ENCODE measurements at regions of chr10 and their contacts with region 1.

Region 1: DNA sequence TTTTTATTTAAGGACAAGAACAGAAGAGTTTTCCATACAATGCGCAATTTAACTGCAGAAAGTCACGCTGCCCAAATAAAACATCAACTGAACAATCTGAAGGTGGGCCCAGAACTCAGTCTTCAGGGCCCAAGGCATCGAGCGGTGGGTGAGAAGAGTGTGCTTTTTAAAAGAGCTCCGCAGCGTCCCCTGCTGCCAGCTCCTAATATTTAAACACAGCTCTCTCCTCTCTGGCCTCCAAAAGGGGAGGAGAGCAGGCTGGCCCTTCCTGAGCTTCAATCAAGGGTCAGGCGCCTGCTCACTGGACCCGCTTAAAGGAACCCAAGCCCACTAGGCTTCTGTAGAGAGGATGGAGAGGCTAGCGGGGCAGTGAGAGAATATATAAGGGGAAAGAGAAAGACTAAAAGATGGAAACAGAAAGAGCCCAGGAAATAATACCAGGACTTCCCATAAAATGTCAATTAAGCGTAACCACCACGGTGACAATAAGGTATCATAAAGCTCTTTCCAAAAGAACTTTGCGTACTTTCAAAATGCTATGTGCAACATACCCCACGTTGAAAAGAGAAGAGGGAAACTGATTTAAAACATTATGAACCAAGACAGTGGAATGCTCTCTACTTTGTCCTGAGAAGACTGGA is 2.8 kb downstream of the FAM53B start:
- DNase-seq: peak; percentile 80
- ATAC-seq: peak; percentile 67
- H3K4me3 ChIP-seq: peak overlapping the region; percentile 44 to 87 (median 62)
- H3K27ac ChIP-seq: peak overlapping the region; percentile 70
- H3K4me1 ChIP-seq: peaks cover 77% of the 10 kb centered on the region
- H3K27me3 ChIP-seq: no peaks in the 10 kb centered on the region; a peak in 1 of 5 replicates
- CTCF ChIP-seq: peak; percentile 86
- EP300 ChIP-seq: no peak
- POLR2A ChIP-seq: no peak
- RAD21 ChIP-seq: peak; percentile 79

Region 2: DNA sequence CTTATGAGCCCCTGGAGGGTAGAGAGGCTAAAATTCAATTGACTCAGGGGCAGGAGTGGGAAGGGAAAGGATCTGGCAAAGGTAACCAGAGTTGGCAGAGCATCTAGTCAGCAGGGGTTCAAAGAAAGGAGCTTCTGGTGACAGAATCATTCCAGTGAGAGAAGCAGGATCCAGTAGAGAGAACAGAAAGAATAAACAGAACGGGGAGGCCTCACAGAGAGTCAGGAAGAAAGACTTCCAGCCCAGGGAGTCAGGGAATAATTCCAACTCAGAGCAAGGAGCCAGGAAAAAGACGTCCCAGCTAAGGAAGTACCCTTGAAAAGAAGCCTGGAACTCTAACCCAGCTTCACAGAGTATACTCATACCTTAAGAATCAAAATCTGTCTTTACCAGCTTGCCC is 783.2 kb before region 1 on chr10:
- CTCF ChIA-PET with region 1: no interaction called
- POLR2A ChIA-PET with region 1: no interaction called
- in situ Hi-C with region 1: no loop called
- intact Hi-C with region 1: no loop called
- DNase-seq: no peak
- ATAC-seq: no peak
- H3K4me3 ChIP-seq: no peak overlapping the region
- H3K27ac ChIP-seq: no peak overlapping the region
- H3K4me1 ChIP-seq: peaks cover 10% of the 10 kb centered on the region
- H3K27me3 ChIP-seq: peaks cover 2 to 11% of the 10 kb centered on the region in 2 experiments; a peak in 1 of 5 replicates
- CTCF ChIP-seq: no peak
- EP300 ChIP-seq: no peak
- POLR2A ChIP-seq: no peak
- RAD21 ChIP-seq: no peak

Region 3: DNA sequence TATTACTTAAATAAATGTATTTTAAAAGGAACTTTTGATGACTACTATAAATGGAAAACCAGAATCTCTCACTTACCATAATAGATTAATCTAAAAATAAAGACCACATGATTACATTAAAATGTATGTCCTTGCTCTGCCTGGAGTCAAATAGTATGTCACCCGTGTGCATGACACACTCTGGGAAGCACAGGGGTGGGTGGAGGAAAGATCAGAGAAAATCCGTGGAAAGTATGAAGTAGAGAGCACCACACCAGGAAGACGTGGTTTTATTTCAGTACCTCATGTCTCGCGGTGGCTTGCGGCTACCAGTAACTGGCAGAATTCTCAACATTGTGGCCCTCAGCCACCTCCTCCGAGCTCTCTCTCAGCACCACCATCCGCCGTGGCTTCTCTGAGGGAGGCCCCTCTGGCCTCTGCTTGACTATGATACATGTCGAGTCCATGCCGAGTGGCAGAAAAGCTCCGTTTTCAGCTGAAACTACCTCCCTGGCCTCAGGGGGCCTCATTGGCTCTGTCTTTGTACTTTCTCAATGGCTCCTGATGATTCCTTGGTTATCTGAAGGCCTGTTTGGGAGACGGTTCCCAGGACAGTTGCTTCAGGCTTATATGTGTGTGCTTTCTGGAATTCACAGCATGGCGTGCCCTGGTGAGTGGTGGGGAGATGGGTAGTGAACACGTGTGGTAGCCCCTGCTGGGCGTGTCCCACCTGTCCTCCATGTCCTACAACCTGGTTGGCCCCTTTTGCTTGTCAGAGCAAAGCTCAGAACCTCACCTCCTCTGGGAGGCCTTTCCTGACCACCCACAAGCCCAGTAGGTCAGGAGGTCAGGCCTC is 230.0 kb before region 1 on chr10:
- CTCF ChIA-PET with region 1: no interaction called
- POLR2A ChIA-PET with region 1: no interaction called
- in situ Hi-C with region 1: no loop called
- intact Hi-C with region 1: no loop called
- DNase-seq: no peak
- ATAC-seq: no peak
- H3K4me3 ChIP-seq: no peak overlapping the region
- H3K27ac ChIP-seq: no peak overlapping the region
- H3K4me1 ChIP-seq: peaks cover 8% of the 10 kb centered on the region
- H3K27me3 ChIP-seq: no peaks in the 10 kb centered on the region
- CTCF ChIP-seq: no peak
- EP300 ChIP-seq: no peak
- POLR2A ChIP-seq: no peak
- RAD21 ChIP-seq: no peak

Region 4: DNA sequence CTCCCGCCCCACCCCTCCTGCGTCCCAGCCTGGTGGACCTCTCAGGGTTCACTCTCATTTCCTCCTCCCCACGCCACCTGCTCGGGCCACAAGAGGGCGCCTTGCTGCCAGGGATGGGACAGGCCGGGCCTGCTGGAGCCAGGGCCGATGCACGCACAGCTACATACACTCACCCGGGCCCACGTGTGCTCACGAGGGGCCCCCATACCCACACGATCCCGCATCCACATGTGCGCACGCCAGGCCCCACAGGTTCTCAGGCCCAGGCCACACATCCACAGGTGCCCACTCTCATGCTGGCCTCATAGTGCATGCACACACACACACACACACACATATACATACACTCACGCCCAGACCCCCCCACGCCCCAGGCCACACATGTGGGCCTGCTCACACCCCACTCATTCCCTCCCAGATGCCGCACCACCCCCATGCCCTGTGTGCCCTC is 211.2 kb before region 1 on chr10:
- CTCF ChIA-PET with region 1: interaction called, 4 read pairs
- POLR2A ChIA-PET with region 1: no interaction called
- in situ Hi-C with region 1: loop called (anchors 5 kb)
- intact Hi-C with region 1: loop called (anchors 2 kb)
- DNase-seq: peak; percentile 56
- ATAC-seq: peak; percentile 93
- H3K4me3 ChIP-seq: peak overlapping the region in 1 of 3 experiments; percentile 45; a peak in 1 of 6 replicates
- H3K27ac ChIP-seq: no peak overlapping the region
- H3K4me1 ChIP-seq: peaks cover 36% of the 10 kb centered on the region
- H3K27me3 ChIP-seq: no peaks in the 10 kb centered on the region
- CTCF ChIP-seq: peak; percentile 99
- EP300 ChIP-seq: no peak
- POLR2A ChIP-seq: no peak
- RAD21 ChIP-seq: peak; percentile 87

Region 5: DNA sequence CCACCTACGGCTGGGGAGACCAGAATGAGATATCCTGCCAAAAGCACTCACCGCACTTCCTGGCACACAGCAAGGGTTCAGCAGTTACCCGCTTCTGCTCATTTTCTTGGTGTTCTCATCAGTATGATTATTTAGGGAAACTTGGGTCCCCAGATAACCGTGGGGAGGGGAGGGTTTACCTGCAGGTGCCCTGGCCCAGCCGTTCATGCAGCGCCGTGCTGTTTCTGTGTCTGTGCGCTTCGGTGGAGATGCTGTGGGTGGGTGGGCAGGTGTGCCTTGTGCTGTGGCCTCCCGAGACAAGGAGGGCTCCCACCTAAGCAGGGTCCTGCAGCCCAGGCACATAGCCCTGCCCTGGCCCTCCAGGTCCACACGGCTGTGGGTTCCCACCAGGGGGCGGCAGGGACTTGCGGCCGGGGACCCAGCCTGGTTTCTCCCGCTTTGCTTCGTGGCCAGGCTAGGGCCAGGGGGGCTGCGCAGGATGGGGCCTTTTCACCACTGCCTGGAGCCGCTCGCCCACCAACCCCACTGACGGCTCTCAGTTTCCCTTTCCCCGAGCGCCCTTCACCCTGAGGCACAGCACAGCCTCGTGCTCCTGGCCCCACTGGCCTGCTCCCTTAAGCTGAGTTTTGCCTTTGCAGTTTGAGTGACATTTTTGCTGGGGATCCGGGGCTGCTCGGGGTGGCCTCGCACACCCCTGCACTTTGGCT is 201.3 kb before region 1 on chr10:
- CTCF ChIA-PET with region 1: interaction called, 11 read pairs
- POLR2A ChIA-PET with region 1: no interaction called
- in situ Hi-C with region 1: loop called (anchors 5 kb)
- intact Hi-C with region 1: no loop called
- DNase-seq: peak; percentile 22
- ATAC-seq: peak; percentile 88
- H3K4me3 ChIP-seq: peak overlapping the region in 1 of 3 experiments; percentile 1; a peak in 1 of 6 replicates
- H3K27ac ChIP-seq: no peak overlapping the region
- H3K4me1 ChIP-seq: peaks cover 10% of the 10 kb centered on the region; the same call in 1 of the 2 replicates
- H3K27me3 ChIP-seq: peaks cover 0 to 1% of the 10 kb centered on the region in 2 experiments; a peak in 1 of 5 replicates
- CTCF ChIP-seq: peak; percentile 97
- EP300 ChIP-seq: no peak
- POLR2A ChIP-seq: no peak
- RAD21 ChIP-seq: peak; percentile 95

Region 6: DNA sequence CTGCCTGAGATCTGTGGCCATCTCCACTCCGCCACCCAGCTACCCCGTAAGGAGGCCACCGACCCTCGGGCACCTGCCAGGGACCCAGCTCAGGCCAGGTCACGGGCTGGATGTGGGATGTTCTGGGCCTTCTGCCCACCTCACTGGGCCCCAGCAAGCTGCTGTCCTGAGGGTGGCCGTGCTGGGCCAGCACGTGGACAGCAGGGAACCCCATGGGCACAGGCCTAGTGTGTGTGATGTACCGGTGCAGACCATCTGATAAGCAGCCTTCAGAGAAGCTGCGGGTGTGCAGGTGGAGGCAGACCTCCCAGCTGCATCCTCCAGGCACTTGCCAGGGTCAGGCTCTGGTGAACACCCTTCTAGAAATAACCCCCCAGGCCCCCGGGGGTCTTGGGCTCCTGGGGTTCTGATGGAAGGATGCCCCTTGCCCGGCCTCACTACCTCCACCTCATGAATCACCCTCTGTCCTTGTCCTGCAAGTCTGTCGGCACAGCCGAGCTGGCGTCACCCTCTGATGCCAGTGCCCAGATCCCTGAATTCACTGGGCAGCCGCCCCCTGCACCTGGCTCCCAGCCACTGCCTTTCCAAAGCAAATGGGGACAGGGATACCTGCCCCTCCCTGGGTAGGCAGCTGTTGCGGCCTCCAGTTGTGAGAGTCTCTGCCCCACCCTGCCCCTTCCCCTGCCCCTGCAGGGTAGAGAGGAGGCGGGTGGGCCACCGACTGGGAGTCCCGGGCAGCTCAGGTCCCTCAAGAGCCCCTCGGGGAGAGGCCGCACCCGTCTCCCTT is 137.0 kb before region 1 on chr10:
- CTCF ChIA-PET with region 1: no interaction called
- POLR2A ChIA-PET with region 1: interaction called, 4 read pairs
- in situ Hi-C with region 1: no loop called
- intact Hi-C with region 1: loop called (anchors 5 kb)
- DNase-seq: no peak
- ATAC-seq: no peak
- H3K4me3 ChIP-seq: no peak overlapping the region
- H3K27ac ChIP-seq: no peak overlapping the region
- H3K4me1 ChIP-seq: peaks cover 54% of the 10 kb centered on the region
- H3K27me3 ChIP-seq: no peaks in the 10 kb centered on the region
- CTCF ChIP-seq: no peak
- EP300 ChIP-seq: no peak
- POLR2A ChIP-seq: no peak
- RAD21 ChIP-seq: no peak

Region 7: DNA sequence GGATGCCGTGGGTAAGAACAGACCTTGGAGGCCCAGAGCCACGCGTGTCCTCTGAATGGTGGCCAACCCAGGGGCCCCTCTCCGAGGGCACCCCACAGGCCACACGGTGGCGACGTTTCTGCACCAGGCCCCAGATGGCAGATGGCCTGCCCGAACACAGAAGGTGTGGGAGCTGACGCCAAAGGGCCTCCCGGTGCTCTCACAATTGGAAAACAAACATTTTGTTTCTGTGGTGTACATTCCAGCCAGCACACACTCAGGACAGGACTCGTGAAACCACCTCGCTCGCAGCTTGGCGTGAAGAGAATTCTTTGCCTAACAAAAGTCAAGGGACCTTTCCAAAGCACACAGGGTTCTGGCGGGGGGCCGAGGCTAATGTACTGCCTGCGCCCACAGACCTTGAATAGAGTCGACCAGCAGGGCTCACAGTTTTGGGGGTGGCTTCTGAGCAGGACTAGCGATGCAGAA is 109.3 kb before region 1 on chr10:
- CTCF ChIA-PET with region 1: interaction called, 7 read pairs
- POLR2A ChIA-PET with region 1: no interaction called
- in situ Hi-C with region 1: no loop called
- intact Hi-C with region 1: loop called (anchors 1 kb)
- DNase-seq: peak; percentile 8
- ATAC-seq: peak; percentile 62
- H3K4me3 ChIP-seq: no peak overlapping the region
- H3K27ac ChIP-seq: no peak overlapping the region
- H3K4me1 ChIP-seq: no peaks in the 10 kb centered on the region
- H3K27me3 ChIP-seq: no peaks in the 10 kb centered on the region
- CTCF ChIP-seq: peak; percentile 61
- EP300 ChIP-seq: no peak
- POLR2A ChIP-seq: no peak
- RAD21 ChIP-seq: peak; percentile 52; the same call in 1 of the 2 replicates

Region 8: GRCh38 chr10:124791378-124792348 is 50.3 kb after region 1 on chr10 and contains the start of gene EEF1AKMT2:
- CTCF ChIA-PET with region 1: no interaction called
- POLR2A ChIA-PET with region 1: interaction called, 4 read pairs
- in situ Hi-C with region 1: no loop called
- intact Hi-C with region 1: loop called (anchors 5 kb)
- DNase-seq: peak; percentile 79
- ATAC-seq: peak; percentile 98
- H3K4me3 ChIP-seq: peak within 1 kb of the TSS; percentile 84 to 92 (median 88)
- H3K27ac ChIP-seq: peak within 1 kb of the TSS; percentile 88
- H3K4me1 ChIP-seq: peaks cover 26% of the 10 kb centered on the region
- H3K27me3 ChIP-seq: no peaks in the 10 kb centered on the region; a peak in 2 of 5 replicates
- CTCF ChIP-seq: peak; percentile 66
- EP300 ChIP-seq: peak; percentile 13 to 22; a peak in 1 of 4 replicates
- POLR2A ChIP-seq: peak; percentile 87 to 90
- RAD21 ChIP-seq: peak; percentile 65; the same call in 1 of the 2 replicates
- total RNA-seq, gene EEF1AKMT2: 19.3 and 24.1 TPM in 2 replicates